GM23248 (cell line): ENCODE measurements at regions of chr16 and their contacts with region 1.

Region 1: DNA sequence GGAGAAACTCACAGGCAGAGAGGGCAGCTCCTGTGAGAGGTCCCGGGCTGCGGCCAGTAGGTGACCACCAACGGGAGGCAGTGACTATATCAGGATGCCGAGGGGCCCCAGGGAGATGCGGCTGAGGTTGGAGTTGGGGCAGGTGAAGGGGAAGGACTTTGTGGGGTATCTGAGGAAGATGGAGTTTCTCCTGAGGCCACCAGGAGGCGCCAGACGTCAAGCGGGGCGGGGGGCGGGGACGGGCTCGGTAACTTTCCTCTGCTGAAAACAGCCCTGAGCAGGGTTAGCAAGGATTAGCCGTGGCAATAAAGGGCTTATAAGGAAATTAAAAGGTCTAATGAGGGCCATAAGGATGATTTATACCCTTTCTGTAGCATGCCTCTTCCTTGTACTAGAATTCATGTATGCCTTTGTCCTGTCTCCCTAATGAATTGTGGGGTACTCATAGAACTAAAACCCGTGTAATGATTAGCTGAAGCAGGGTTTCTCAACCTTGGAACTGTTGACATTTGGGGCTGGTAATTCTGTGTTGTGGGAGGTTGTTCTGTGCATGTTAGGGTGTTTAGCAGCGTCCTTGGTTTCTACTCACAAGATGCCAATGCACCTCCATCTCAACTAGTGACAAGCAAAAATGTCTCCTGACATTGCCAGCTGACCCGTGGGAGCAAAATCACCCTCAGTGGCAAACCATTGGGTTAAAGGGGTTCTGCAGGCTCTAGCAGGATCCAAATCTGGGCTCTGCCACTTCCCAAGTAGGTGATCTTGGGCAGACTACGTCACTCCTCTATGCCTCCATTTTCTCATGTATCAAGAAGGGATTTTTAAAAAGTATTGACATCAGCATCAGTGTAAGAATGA is 74.8 kb upstream of the GRIN2A start:
- DNase-seq: peak; percentile 51
- H3K4me3 ChIP-seq: no peak overlapping the region
- H3K27ac ChIP-seq: no peak overlapping the region
- H3K4me1 ChIP-seq: no peaks in the 10 kb centered on the region
- H3K27me3 ChIP-seq: no peaks in the 10 kb centered on the region

Region 2: GRCh38 chr16:9885467-9885866 is 371.5 kb before region 1 on chr16:
- in situ Hi-C with region 1: no loop called
- DNase-seq: no peak
- H3K4me3 ChIP-seq: no peak overlapping the region
- H3K27ac ChIP-seq: no peak overlapping the region
- H3K4me1 ChIP-seq: no peaks in the 10 kb centered on the region
- H3K27me3 ChIP-seq: no peaks in the 10 kb centered on the region

Region 3: GRCh38 chr16:10497132-10498101 is 240.4 kb after region 1 on chr16:
- in situ Hi-C with region 1: loop called (anchors 25 kb)
- DNase-seq: no peak
- H3K4me3 ChIP-seq: no peak overlapping the region
- H3K27ac ChIP-seq: no peak overlapping the region
- H3K4me1 ChIP-seq: no peaks in the 10 kb centered on the region
- H3K27me3 ChIP-seq: no peaks in the 10 kb centered on the region